Activated naive CD4-positive, alpha-beta T cell treated with anti-CD3 and anti-CD28 coated beads for 36 hours (primary cell): ENCODE measurements at regions of chr11 and their contacts with region 1.

Region 1: DNA sequence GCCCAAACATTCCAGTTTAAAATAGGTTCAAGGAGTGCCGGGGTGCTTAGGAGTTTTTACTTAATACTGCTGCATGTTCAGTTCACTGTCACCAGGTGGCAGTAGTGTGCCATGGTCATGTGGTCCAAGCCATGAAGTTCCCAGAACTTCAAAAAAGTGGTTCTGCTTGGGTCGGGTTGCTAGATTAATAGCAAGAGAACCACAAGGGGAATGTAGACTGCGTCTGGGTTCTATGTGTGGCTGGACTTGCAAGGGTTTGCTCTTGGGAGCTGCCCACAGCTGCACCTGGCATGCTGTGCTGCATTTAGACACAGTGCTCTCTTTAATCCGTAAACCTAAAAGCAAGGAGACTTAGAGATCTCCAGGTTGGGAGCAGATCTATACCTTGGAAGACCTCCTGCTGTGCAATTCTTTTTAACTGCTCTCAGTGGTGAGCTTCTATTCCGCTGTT is 6.5 kb upstream of the SPON1 start:
- DNase-seq: peak; percentile 71
- H3K4me3 Mint-ChIP-seq: no peak overlapping the region
- H3K27ac Mint-ChIP-seq: no peak overlapping the region
- H3K4me1 Mint-ChIP-seq: no peaks in the 10 kb centered on the region
- H3K27me3 Mint-ChIP-seq: peaks cover 5% of the 10 kb centered on the region

Region 2: GRCh38 chr11:13772223-13773046 is 183.6 kb before region 1 on chr11:
- CTCF ChIA-PET with region 1: interaction called, 22 read pairs
- intact Hi-C with region 1: loop called (anchors 1 kb)
- DNase-seq: peak; percentile 35
- H3K4me3 Mint-ChIP-seq: no peak overlapping the region
- H3K27ac Mint-ChIP-seq: no peak overlapping the region
- H3K4me1 Mint-ChIP-seq: no peaks in the 10 kb centered on the region
- H3K27me3 Mint-ChIP-seq: no peaks in the 10 kb centered on the region

Region 3: DNA sequence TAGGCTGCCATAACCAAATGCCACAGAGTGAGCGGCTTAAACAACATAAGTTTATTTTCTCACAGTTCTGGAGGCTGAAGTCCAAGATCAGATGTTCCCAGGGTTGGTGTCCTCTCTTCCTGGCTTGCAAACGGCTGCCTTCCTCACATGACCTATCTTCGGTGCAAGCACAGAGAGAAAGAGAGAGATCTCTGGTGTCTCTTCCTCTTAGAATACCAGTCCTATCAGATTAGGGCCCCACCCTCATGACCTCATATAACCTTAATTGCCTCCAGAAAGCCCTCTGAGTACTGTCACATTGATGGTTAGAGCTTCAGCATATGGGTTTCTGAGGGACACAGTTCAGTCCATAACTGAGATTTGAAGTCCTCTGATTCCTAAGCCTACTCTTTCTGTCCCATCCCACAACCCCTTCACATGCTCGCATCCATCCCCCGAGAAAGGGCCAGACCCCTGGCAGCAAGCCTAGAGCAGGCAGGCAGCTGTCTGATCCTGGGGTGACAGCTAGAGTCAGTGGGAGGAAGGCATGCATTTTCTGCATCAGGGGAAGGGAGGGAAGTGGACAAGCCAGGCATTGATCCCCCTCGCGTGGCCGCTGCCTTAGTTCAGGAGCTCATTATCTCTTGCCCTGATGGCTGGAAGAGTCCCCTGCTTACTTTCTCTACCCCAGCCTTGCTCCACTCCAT is 173.5 kb before region 1 on chr11:
- CTCF ChIA-PET with region 1: interaction called, 11 read pairs
- intact Hi-C with region 1: no loop called
- DNase-seq: no peak
- H3K4me3 Mint-ChIP-seq: no peak overlapping the region
- H3K27ac Mint-ChIP-seq: no peak overlapping the region
- H3K4me1 Mint-ChIP-seq: no peaks in the 10 kb centered on the region
- H3K27me3 Mint-ChIP-seq: no peaks in the 10 kb centered on the region

Region 4: DNA sequence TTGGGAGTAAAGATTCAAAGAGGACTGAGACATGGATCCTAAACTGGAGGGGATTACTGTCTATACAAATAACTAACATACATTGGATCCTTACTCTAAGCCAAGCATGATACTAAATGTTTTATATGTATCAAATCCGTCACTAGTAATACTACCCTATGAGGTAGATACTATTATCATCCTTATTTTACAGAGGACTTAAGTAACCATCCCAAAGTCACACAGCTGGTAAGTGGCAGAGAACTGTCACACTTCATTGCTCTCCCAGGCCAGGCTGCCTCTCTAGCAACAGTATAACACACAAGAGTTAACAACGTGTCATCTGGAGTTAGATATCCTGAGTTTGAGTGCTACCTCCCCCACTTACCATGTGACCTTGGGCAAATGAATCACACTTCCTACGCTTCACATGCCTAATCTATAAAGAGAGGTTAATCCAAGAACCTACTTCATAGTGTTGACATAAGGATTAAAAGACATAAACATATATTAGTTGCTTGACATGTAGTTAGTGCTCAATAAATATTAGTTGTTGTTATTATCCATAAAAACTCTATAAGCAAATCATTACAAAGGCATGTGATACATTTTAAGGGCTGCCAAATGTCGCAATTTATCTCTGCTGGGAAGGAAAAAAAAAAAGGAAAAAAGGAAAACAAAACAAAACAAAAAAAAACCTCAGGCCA is 27.3 kb before region 1 on chr11:
- CTCF ChIA-PET with region 1: interaction called, 10 read pairs
- intact Hi-C with region 1: no loop called
- DNase-seq: peak; percentile 42
- H3K4me3 Mint-ChIP-seq: no peak overlapping the region
- H3K27ac Mint-ChIP-seq: no peak overlapping the region
- H3K4me1 Mint-ChIP-seq: peaks cover 31% of the 10 kb centered on the region
- H3K27me3 Mint-ChIP-seq: no peaks in the 10 kb centered on the region

Region 5: DNA sequence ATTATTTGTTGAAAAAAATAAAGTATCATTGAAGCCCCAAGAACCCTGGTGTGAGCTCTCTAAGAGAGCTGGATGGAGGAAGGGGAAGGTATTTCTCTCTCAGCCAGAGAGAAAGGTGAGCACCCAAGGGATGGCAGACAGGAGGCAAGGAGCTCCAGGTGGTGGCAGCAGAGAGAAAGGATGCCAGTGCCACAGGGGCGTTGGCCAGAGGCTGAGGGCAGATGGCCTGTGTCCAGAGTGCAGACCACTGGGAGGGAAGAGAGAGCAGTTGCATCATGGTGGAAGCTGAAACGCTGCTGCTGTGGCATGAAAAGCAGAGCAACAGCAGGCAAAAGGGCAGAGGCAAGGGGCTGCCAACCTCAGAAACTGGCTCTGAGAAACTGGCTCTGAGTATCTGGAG is 15.0 kb after region 1 on chr11:
- CTCF ChIA-PET with region 1: interaction called, 16 read pairs
- intact Hi-C with region 1: no loop called
- DNase-seq: peak; percentile 53
- H3K4me3 Mint-ChIP-seq: no peak overlapping the region
- H3K27ac Mint-ChIP-seq: no peak overlapping the region
- H3K4me1 Mint-ChIP-seq: peaks cover 16% of the 10 kb centered on the region
- H3K27me3 Mint-ChIP-seq: peaks cover 6% of the 10 kb centered on the region

Region 6: GRCh38 chr11:14249121-14249963 is 293.3 kb after region 1 on chr11:
- CTCF ChIA-PET with region 1: interaction called, 51 read pairs
- intact Hi-C with region 1: loop called (anchors 1 kb)
- DNase-seq: peak; percentile 82
- H3K4me3 Mint-ChIP-seq: no peak overlapping the region
- H3K27ac Mint-ChIP-seq: no peak overlapping the region
- H3K4me1 Mint-ChIP-seq: peaks cover 15% of the 10 kb centered on the region
- H3K27me3 Mint-ChIP-seq: no peaks in the 10 kb centered on the region

Region 7: DNA sequence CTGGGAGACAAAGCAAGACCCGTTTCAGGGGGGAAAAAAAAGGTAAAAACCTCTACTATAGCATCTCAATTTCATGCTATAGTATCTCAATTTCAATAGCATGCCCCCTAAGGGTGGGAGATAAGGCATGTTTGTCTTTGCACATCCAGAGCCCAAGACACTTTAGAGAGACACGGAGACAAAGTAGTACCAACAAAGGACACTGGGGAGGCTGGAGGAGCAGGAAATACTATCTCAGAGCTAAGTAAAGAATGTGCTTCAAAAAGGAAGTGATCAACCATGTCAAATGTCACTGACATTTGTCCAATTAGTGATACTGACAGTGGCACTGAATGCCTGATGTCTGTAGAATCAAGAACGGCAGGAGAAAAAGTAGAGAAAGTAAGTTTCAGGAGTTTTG is 334.4 kb after region 1 on chr11:
- CTCF ChIA-PET with region 1: no interaction called
- intact Hi-C with region 1: no loop called
- DNase-seq: no peak
- H3K4me3 Mint-ChIP-seq: no peak overlapping the region
- H3K27ac Mint-ChIP-seq: no peak overlapping the region
- H3K4me1 Mint-ChIP-seq: peaks cover 3% of the 10 kb centered on the region
- H3K27me3 Mint-ChIP-seq: no peaks in the 10 kb centered on the region

Region 8: GRCh38 chr11:14454861-14455632 is 499.1 kb after region 1 on chr11:
- CTCF ChIA-PET with region 1: interaction called, 3 read pairs
- intact Hi-C with region 1: loop called (anchors 5 kb)
- DNase-seq: no peak
- H3K4me3 Mint-ChIP-seq: no peak overlapping the region
- H3K27ac Mint-ChIP-seq: no peak overlapping the region
- H3K4me1 Mint-ChIP-seq: no peaks in the 10 kb centered on the region
- H3K27me3 Mint-ChIP-seq: no peaks in the 10 kb centered on the region